ENCODE measurements at regions of chr5 and their contacts with region 1.

Region 1: DNA sequence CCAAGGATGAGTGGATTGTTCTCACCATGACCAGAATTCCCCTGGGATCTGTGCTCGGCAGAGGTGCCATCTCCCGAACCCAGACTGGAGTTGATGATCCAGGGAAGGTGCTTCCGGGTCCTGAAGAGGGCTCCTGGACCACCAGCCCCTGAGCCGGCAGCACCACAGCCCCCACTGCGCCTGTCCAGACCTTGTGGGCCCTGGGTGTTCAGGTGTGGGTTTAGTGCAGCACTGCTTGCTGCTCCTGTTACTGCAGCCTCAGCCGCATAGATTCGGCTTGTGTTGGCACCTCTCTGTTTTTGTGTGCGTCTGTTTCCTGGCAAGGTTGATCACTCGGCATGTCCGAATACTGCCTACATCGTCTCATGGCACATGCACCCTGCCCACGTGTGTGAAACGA is 16.3 kb upstream of the NPM1 start:
- DNase-seq: no peak
- ATAC-seq: no peak
- H3K4me3 ChIP-seq: no peak overlapping the region
- H3K27ac ChIP-seq: no peak overlapping the region
- H3K4me1 ChIP-seq: peaks cover 12% of the 10 kb centered on the region
- H3K27me3 ChIP-seq: no peaks in the 10 kb centered on the region
- CTCF ChIP-seq: no peak
- EP300 ChIP-seq: no peak
- POLR2A ChIP-seq: no peak
- RAD21 ChIP-seq: no peak

Region 2: GRCh38 chr5:171413153-171413910 is 42.0 kb after region 1 on chr5:
- CTCF ChIA-PET with region 1: interaction called, 5 read pairs
- POLR2A ChIA-PET with region 1: no interaction called
- RAD21 ChIA-PET with region 1: no interaction called
- SMC1A ChIA-PET with region 1: no interaction called
- in situ Hi-C with region 1: no loop called
- intact Hi-C with region 1: loop called (anchors 1 kb)
- DNase-seq: no peak
- ATAC-seq: peak; percentile 24
- H3K4me3 ChIP-seq: no peak overlapping the region
- H3K27ac ChIP-seq: no peak overlapping the region
- H3K4me1 ChIP-seq: 0 out of 2 replicates have a peak, but pooled peaks cover under 1% of the 10 kb centered on the region
- H3K27me3 ChIP-seq: no peaks in the 10 kb centered on the region
- CTCF ChIP-seq: no peak
- EP300 ChIP-seq: no peak
- POLR2A ChIP-seq: 0 out of 2 replicates have a peak, but pooled peaks have one; percentile 31
- RAD21 ChIP-seq: no peak